PC-3 (cell line): ENCODE measurements at regions of chr6 and their contacts with region 1.

Region 1: DNA sequence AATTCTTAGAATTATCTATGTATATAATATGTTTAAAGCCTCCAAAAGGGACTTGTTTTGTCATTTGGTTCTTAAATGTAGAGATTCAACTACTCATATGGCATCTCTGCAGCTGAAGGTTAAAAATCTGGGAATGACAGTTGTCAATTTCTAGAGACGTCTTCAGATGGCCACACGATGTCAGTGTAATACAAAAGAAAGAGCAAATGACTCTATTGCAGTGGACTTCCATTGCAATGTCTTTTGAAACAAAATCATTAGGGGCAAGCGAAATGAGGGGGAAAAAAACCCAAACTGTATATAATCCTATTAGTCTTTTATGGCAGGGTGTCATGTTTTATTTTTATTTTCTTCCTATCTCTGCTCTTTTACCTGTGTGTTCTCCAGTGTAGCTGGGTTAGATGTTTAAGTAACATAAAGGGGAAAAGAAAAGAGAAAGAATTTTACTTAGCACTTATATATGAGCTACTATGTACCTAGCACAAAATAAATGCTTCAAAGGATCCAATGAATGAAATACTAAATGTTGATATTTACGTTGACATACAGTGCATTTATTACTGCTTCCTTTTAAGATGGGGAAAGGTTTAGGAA is 26.2 kb downstream of the CCN2 start:
- DNase-seq: peak; percentile 63
- ATAC-seq: peak; percentile 48
- H3K4me3 ChIP-seq: no peak overlapping the region
- H3K27ac ChIP-seq: no peak overlapping the region
- H3K4me1 ChIP-seq: peaks cover 4% of the 10 kb centered on the region; the same call in 1 of the 2 replicates
- H3K27me3 ChIP-seq: no peaks in the 10 kb centered on the region
- CTCF ChIP-seq: peak; percentile 74

Region 2: DNA sequence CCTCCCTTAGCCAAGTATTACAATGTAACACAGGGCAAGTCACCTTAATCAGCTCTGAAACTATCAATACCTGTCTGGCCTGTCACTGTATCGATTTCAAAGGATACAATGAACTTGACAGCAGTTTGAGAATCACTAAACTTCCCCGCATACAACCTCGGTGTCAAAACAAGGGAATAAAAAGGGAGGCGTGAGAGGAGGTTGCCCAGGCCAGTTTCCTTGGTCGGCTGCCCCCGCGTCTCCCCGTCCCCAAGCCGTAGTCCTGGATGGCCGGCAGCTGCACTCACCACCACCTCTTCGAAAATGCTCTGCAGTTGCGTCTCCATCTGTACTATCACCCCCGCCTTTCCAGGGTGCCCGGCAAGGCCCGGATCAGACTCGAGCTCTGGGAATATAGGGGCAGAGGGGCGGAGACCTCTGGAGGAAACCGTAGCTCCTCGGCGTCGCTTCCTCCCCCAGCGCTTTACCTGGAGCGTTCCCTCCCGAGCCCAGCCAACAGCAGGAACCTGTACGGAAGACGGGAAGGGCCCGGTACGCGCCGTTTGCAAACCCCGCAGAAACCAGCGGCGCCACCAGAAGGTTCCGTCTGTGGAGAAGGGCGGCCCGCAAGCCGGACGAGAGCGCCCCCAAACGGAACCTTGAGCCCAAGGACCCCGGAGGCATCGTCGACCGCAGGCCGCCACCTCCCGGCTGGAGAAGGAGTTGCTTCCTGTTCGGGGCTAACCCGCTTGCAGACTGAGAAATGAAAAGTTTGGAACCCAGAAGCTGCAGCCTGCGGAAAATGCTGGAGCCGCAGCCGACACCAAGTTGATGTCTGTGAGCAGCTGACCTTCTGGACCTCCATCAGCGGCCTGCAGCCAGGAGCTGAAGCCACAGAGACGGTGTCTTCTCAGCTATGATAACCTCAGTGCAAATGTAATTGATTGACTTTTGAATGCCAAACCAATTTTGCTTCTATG is 297.0 kb before region 1 on chr6 and contains the start of gene MED23:
- CTCF ChIA-PET with region 1: no interaction called
- POLR2A ChIA-PET with region 1: no interaction called
- intact Hi-C with region 1: no loop called
- DNase-seq: peak; percentile 90
- ATAC-seq: peak; percentile 92
- H3K4me3 ChIP-seq: peak within 1 kb of the TSS; percentile 98
- H3K27ac ChIP-seq: peak within 1 kb of the TSS; percentile 63
- H3K4me1 ChIP-seq: peaks cover 39% of the 10 kb centered on the region
- H3K27me3 ChIP-seq: no peaks in the 10 kb centered on the region
- CTCF ChIP-seq: peak; percentile 93
- total RNA-seq, gene MED23: 15.4 and 18.1 TPM in 2 replicates

Region 3: GRCh38 chr6:132161283-132161682 is 236.3 kb after region 1 on chr6:
- CTCF ChIA-PET with region 1: no interaction called
- POLR2A ChIA-PET with region 1: no interaction called
- intact Hi-C with region 1: loop called (anchors 2 kb)
- DNase-seq: peak; percentile 62
- ATAC-seq: peak; percentile 58
- H3K4me3 ChIP-seq: no peak overlapping the region
- H3K27ac ChIP-seq: no peak overlapping the region
- H3K4me1 ChIP-seq: no peaks in the 10 kb centered on the region
- H3K27me3 ChIP-seq: no peaks in the 10 kb centered on the region
- CTCF ChIP-seq: peak; percentile 72

Region 4: DNA sequence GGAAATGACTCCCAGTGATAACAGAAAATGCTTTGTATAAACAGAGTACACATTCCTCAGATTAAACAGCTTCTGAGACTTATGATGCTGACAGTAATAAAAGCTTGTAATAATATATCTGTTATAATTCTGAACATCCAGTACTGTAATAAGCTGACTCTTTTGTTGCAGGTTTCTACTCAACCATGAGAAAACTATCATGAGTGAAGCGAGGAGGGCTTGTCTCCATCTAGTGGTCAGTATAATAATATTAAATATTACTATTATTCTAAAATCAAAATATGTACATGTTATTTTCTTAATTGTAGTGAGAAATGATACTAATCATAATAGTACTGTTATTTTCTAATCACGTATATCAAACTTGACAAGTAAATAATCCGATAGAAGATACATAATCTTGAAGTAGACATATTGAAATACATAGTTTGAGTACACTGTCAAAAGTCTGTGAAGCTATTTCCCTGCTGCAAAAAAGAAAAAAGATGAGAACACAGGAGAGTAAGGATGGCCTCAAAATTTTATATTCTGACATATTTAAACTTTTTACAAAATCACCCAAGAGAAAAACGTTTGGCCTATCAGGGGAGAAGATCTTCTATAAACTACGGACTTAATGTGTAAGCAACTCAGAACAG is 293.2 kb after region 1 on chr6:
- CTCF ChIA-PET with region 1: interaction called, 4 read pairs
- POLR2A ChIA-PET with region 1: no interaction called
- intact Hi-C with region 1: loop called (anchors 2 kb)
- DNase-seq: peak; percentile 42
- ATAC-seq: no peak; the same call in 1 of the 2 replicates
- H3K4me3 ChIP-seq: no peak overlapping the region
- H3K27ac ChIP-seq: no peak overlapping the region
- H3K4me1 ChIP-seq: no peaks in the 10 kb centered on the region
- H3K27me3 ChIP-seq: no peaks in the 10 kb centered on the region
- CTCF ChIP-seq: peak; percentile 36

Region 5: DNA sequence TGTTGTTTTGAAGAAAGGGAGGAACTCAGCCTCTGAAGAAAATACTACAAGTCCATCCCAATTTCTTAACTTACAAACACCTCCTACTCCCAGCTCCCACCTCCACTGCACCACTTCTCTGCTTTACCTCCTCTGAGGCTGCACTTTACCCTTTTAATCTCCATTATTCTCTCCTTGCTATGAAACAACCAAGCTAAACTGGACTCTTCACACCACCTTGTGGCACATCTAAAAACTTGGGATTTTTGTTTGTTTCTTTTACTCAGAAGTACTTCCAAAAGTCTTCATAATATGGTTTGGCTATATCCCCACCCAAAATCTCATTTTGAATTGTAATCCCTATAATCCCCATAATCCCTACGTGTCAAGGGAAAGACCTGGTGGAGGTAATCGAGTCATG is 334.1 kb after region 1 on chr6:
- CTCF ChIA-PET with region 1: interaction called, 3 read pairs
- POLR2A ChIA-PET with region 1: no interaction called
- intact Hi-C with region 1: loop called (anchors 1 kb)
- DNase-seq: peak; percentile 40
- ATAC-seq: peak; percentile 40; the same call in 1 of the 2 replicates
- H3K4me3 ChIP-seq: no peak overlapping the region
- H3K27ac ChIP-seq: no peak overlapping the region
- H3K4me1 ChIP-seq: no peaks in the 10 kb centered on the region
- H3K27me3 ChIP-seq: no peaks in the 10 kb centered on the region
- CTCF ChIP-seq: peak; percentile 59